ENCODE measurements at regions of chr7 and their contacts with region 1.

Region 1: DNA sequence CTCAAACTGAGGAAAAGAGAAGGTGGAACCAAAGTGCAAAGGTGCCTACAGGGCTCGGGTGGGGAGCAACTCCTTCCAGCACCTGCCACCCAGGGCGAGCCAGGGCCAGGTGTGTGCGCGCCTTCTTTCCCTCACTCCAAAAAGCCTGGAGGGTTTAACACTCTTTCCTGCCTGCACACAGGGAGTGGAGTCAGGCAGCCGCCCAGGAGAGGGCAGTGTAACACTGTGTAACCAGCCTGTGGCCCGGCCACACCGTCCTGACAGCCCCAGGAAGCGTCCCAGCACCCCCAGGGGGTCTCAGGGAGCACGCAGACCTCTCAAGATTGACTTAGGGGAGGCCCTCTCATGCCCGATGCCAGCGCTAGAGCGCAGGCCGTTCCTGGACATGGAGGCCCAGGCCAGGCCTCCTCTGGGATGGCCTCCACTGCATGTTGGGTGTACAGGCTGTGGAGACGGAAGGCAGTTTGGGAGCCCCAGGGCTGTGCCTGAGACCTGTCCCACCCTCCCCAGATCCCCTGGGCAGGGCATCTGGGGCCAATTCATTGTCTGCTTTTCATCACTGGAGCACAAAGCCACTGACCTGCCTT is 13.4 kb downstream of the BRI3 start:
- DNase-seq: peak in 4 of 14 experiments; percentile 15 to 48 (median 36)
- ATAC-seq: peak; percentile 51
- H3K4me3 ChIP-seq: no peak overlapping the region
- H3K4me3 Mint-ChIP-seq: no peak overlapping the region
- H3K27ac ChIP-seq: no peak overlapping the region
- H3K27ac Mint-ChIP-seq: no peak overlapping the region
- H3K4me1 ChIP-seq: no peaks in the 10 kb centered on the region
- H3K4me1 Mint-ChIP-seq: no peaks in the 10 kb centered on the region
- H3K27me3 ChIP-seq: no peaks in the 10 kb centered on the region
- H3K27me3 Mint-ChIP-seq: no peaks in the 10 kb centered on the region
- CTCF ChIP-seq: peak; percentile 19

Region 2: DNA sequence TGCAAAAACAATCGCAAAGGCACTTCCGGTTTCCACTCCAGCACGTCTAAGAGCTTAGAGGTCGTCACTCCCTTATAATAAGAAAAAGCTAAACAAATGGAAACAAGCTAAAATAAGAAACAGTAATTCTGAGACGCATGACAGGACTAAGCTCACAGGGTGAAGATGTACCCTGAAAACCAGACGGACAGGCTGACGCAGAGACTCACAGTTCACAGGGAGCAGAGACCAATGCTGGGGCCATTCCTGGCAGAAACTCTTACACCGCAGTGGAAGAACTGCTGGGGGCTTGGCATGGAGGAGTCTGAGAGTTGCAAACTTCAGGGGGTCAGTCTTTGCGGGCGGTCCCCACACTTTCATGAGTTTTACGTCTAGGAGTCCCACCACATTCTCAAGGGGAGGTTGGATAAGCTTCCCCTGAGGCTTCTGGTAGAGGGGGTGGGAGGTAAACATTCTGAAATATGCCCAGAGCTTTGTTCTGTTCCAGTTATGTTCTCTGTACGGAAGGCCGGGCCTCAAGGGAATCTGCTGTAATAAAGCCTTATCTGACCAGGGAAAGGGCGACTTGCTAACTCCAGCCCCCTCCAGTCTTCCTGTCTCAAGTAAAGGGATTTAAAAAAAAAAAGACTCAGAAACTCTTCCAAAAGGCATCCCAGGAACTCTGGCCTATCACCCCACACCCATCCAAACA is 34.4 kb after region 1 on chr7:
- CTCF ChIA-PET with region 1: no interaction called
- POLR2A ChIA-PET with region 1: no interaction called
- intact Hi-C with region 1: no loop called
- DNase-seq: no peak
- ATAC-seq: no peak
- H3K4me3 ChIP-seq: no peak overlapping the region
- H3K4me3 Mint-ChIP-seq: no peak overlapping the region
- H3K27ac ChIP-seq: no peak overlapping the region
- H3K27ac Mint-ChIP-seq: no peak overlapping the region
- H3K4me1 ChIP-seq: no peaks in the 10 kb centered on the region
- H3K4me1 Mint-ChIP-seq: no peaks in the 10 kb centered on the region
- H3K27me3 ChIP-seq: no peaks in the 10 kb centered on the region
- H3K27me3 Mint-ChIP-seq: no peaks in the 10 kb centered on the region
- CTCF ChIP-seq: no peak

Region 3: DNA sequence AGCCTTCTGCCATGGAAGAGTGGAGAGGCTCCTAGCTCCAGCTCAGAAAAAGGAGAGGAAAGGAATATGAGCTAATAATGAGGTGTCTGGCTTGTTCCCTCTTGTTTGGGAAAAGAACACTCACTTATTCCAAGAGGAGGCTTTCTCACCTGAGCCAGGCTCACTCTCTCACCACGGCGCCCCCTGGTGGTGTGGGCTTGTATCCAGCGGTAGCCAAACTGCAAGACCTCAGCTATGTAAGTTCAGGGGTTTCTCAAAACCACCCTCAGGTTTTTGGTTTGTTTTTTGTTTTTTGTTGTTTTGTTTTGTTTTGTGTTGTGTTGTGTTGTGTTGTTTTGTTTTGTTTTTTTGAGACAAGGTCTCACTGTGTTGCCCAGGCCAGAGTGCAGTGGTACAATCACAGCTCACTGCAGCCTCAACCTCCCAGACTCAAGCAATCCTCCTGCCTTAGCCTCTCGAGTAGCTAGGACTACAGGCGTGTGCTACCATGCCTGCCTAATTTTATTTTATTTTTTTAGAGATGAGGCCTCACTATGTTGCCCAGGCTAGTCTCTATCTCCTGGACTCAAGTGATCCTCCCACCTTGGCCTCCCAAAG is 450.9 kb after region 1 on chr7:
- CTCF ChIA-PET with region 1: no interaction called
- POLR2A ChIA-PET with region 1: no interaction called
- intact Hi-C with region 1: loop called (anchors 5 to 10 kb)
- DNase-seq: peak; percentile 50 to 79 (median 62)
- ATAC-seq: no peak
- H3K4me3 ChIP-seq: no peak overlapping the region
- H3K4me3 Mint-ChIP-seq: no peak overlapping the region
- H3K27ac ChIP-seq: no peak overlapping the region
- H3K27ac Mint-ChIP-seq: no peak overlapping the region
- H3K4me1 ChIP-seq: no peaks in the 10 kb centered on the region
- H3K4me1 Mint-ChIP-seq: no peaks in the 10 kb centered on the region
- H3K27me3 ChIP-seq: no peaks in the 10 kb centered on the region
- H3K27me3 Mint-ChIP-seq: peaks cover 19% of the 10 kb centered on the region
- CTCF ChIP-seq: peak; percentile 69

Measured in CD4-positive, alpha-beta T cell (primary cell).